CD14-positive monocyte (primary cell): ENCODE measurements at regions of chr2 and their contacts with region 1.

Region 1: GRCh38 chr2:177353187-177353478 is 39.4 kb upstream of the AGPS start:
- DNase-seq: peak in 1 of 3 donors; percentile 29
- H3K4me3 ChIP-seq: peak overlapping the region in 1 of 3 experiments; percentile 60
- H3K4me3 Mint-ChIP-seq: peak overlapping the region in 1 of 2 donors; percentile 73
- H3K27ac ChIP-seq: peak overlapping the region; percentile 29 to 77
- H3K27ac Mint-ChIP-seq: peak overlapping the region in 4 of 7 donors; percentile 60 to 85 (median 77)
- H3K4me1 ChIP-seq: peaks cover 45 to 51% of the 10 kb centered on the region in 2 donors
- H3K4me1 Mint-ChIP-seq: peaks cover 13% of the 10 kb centered on the region
- H3K27me3 ChIP-seq: no peaks in the 10 kb centered on the region
- H3K27me3 Mint-ChIP-seq: peaks cover 0 to 4% (median 0%) of the 10 kb centered on the region in 3 donors
- CTCF ChIP-seq: no peak

Region 2: GRCh38 chr2:177400337-177400923 is 47.3 kb after region 1 on chr2:
- intact Hi-C with region 1: loop called in 1 of 2 experiments (anchors 10 kb)
- DNase-seq: no peak
- H3K4me3 ChIP-seq: no peak overlapping the region
- H3K4me3 Mint-ChIP-seq: no peak overlapping the region
- H3K27ac ChIP-seq: no peak overlapping the region
- H3K27ac Mint-ChIP-seq: no peak overlapping the region
- H3K4me1 ChIP-seq: peaks cover 15 to 30% of the 10 kb centered on the region in 2 donors
- H3K4me1 Mint-ChIP-seq: peaks cover 62% of the 10 kb centered on the region
- H3K27me3 ChIP-seq: no peaks in the 10 kb centered on the region
- H3K27me3 Mint-ChIP-seq: no peaks in the 10 kb centered on the region
- CTCF ChIP-seq: no peak